Activated T-helper 1 cell treated with anti-CD3 and anti-CD28 coated beads, Interleukin-12 subunit alpha, Interleukin-12 subunit beta, Interleukin-2, Interleukin-4 antibody, amounts not matched to agents 30 ng/mL and 10 ng/mL and 1 ng/mL, durations not matched to agents 14 hours and 24 hours and 36 hours (primary cell): ENCODE measurements at regions of chr1 and their contacts with region 1.

Region 1: GRCh38 chr1:145891587-145892485 is 6.2 kb upstream of the ANKRD35 start:
- DNase-seq: peak; percentile 37
- H3K4me3 Mint-ChIP-seq: no peak overlapping the region
- H3K27ac Mint-ChIP-seq: no peak overlapping the region
- H3K4me1 Mint-ChIP-seq: peaks cover 2% of the 10 kb centered on the region
- H3K27me3 Mint-ChIP-seq: peaks cover 8% of the 10 kb centered on the region

Region 2: GRCh38 chr1:145906954-145907753 is 15.3 kb after region 1 on chr1:
- intact Hi-C with region 1: loop called (anchors 1 kb)
- DNase-seq: no peak
- H3K4me3 Mint-ChIP-seq: no peak overlapping the region
- H3K27ac Mint-ChIP-seq: no peak overlapping the region
- H3K4me1 Mint-ChIP-seq: peaks cover 5% of the 10 kb centered on the region
- H3K27me3 Mint-ChIP-seq: no peaks in the 10 kb centered on the region

Region 3: DNA sequence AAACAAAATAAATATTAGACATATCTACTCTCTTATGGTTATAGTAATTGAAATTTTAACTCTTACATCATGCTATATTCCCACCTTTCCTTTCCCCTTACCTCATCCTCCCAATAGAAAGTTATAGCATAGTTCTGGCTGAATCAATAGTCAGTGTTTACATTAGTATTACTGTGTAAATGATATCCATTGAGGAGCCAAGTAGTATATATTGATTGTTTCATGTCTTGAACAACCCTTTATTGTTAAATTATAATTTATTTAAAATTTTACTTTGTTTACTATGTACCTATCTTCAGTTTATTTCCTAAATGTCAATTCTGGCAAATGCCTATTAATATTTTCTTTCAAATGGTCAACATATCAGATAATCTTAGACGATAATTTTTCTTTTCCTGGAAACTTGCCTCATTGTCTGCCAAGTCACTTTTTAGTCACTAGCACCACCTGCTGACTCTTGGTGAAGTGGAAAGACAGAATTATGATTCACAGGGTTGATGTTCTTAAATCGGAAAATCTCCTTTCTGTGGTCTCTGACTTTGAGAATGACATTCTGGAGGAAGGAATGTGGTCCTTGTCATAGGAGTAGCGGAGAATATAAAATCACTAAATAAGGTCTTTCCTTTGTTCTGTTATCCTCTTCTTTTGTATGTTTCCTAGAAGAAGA is 121.0 kb after region 1 on chr1:
- intact Hi-C with region 1: loop called (anchors 1 kb)
- DNase-seq: peak; percentile 49
- H3K4me3 Mint-ChIP-seq: no peak overlapping the region
- H3K27ac Mint-ChIP-seq: no peak overlapping the region
- H3K4me1 Mint-ChIP-seq: peaks cover 13% of the 10 kb centered on the region
- H3K27me3 Mint-ChIP-seq: peaks cover 33% of the 10 kb centered on the region